ENCODE measurements at regions of chr12 and their contacts with region 1.

Region 1: GRCh38 chr12:15256766-15257165 is 35.5 kb upstream of the RERG start:
- DNase-seq: no peak
- H3K4me3 ChIP-seq: no peak overlapping the region
- CTCF ChIP-seq: no peak

Region 2: DNA sequence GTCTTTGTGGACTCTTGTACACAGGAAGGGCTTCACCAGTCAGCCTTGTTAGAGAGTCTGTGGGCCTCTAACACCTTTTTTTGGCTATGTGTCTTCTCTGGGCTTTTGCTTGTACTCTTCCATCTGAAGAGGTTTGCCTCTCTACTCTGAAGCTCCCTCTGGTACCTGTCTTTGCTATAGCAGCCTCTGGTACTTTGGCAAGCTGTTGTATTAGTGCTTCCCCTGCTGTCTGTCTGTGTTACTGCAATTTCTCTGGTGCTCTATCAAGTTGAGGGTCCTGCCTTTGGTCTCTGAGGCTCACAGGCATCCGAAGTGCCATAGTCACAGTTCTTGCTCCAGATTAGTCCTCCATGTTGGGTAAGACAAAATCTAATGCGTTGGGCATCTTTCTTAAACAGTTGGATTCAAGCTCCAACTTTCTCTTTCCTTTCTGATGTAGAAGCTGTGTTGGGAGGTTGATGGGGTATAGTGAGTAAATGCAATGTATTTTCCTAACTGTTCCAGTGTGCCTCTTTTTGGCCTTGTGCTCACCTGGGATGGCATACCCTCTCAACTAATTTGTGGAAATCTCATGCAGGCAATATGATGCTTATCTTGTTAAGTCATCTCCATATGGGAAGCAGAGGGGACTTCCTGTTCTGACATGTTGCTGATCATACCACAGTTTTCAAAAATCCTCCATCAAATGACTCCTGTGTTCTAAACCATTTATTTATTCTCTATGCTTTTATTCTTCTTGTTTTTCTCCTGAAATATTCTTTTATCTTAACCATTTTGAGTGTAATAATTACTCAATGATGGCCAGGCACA is 802.5 kb before region 1 on chr12:
- CTCF ChIA-PET with region 1: no interaction called
- POLR2A ChIA-PET with region 1: no interaction called
- DNase-seq: no peak
- H3K4me3 ChIP-seq: no peak overlapping the region
- CTCF ChIP-seq: peak; percentile 34

Region 3: GRCh38 chr12:15268927-15269552 is 12.3 kb after region 1 on chr12:
- CTCF ChIA-PET with region 1: interaction called, 13 read pairs
- POLR2A ChIA-PET with region 1: no interaction called
- DNase-seq: no peak
- H3K4me3 ChIP-seq: no peak overlapping the region
- CTCF ChIP-seq: peak; percentile 82